ENCODE measurements at regions of chr11 and their contacts with region 1.

Region 1: DNA sequence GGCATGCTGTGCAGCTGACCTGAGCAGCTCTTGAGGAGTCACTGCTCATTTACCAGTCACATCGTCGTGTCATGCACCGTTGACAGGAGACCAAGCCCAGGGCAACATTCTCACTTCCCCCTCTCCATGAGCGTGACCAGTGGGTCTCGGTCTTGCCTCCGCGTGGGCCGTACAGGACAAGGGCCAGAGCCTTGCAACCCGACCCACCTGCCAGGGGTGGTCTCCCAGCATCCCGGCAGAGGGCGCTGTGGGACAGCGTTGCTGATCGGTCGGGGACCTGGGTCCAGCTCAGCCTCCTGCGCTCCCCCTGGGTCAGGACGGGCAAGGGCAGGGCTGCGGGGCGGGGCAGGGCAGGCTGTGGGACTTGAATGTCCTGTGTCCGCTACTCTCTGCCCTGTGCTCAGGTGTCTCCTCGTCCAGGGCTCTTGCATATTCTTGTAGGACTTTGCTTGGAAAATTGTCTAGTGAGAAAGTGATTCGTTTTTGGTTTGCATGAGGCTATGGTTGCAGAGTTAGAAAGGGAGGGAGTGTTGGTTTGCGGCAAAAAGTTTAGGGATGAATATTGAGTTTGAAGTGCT is 16.2 kb downstream of the EIF4G2 start:
- DNase-seq: peak; percentile 90
- H3K4me3 Mint-ChIP-seq: no peak overlapping the region
- H3K27ac Mint-ChIP-seq: no peak overlapping the region
- H3K4me1 Mint-ChIP-seq: peaks cover 14% of the 10 kb centered on the region
- H3K27me3 Mint-ChIP-seq: no peaks in the 10 kb centered on the region

Region 2: GRCh38 chr11:10426475-10426874 is 366.0 kb before region 1 on chr11:
- CTCF ChIA-PET with region 1: no interaction called
- intact Hi-C with region 1: no loop called
- DNase-seq: no peak
- H3K4me3 Mint-ChIP-seq: no peak overlapping the region
- H3K27ac Mint-ChIP-seq: no peak overlapping the region
- H3K4me1 Mint-ChIP-seq: no peaks in the 10 kb centered on the region
- H3K27me3 Mint-ChIP-seq: peaks cover 5% of the 10 kb centered on the region

Region 3: GRCh38 chr11:10725114-10725906 is 67.2 kb before region 1 on chr11:
- CTCF ChIA-PET with region 1: no interaction called
- intact Hi-C with region 1: no loop called
- DNase-seq: peak; percentile 43
- H3K4me3 Mint-ChIP-seq: no peak overlapping the region
- H3K27ac Mint-ChIP-seq: peak overlapping the region; percentile 46
- H3K4me1 Mint-ChIP-seq: peaks cover 22% of the 10 kb centered on the region
- H3K27me3 Mint-ChIP-seq: no peaks in the 10 kb centered on the region

Region 4: GRCh38 chr11:10777393-10777793 is 15.1 kb before region 1 on chr11:
- CTCF ChIA-PET with region 1: interaction called, 24 read pairs
- intact Hi-C with region 1: no loop called
- DNase-seq: no peak
- H3K4me3 Mint-ChIP-seq: no peak overlapping the region
- H3K27ac Mint-ChIP-seq: no peak overlapping the region
- H3K4me1 Mint-ChIP-seq: peaks cover 6% of the 10 kb centered on the region
- H3K27me3 Mint-ChIP-seq: no peaks in the 10 kb centered on the region

Region 5: GRCh38 chr11:10847960-10848870 is 55.7 kb after region 1 on chr11:
- CTCF ChIA-PET with region 1: interaction called, 11 read pairs
- intact Hi-C with region 1: no loop called
- DNase-seq: no peak
- H3K4me3 Mint-ChIP-seq: no peak overlapping the region
- H3K27ac Mint-ChIP-seq: no peak overlapping the region
- H3K4me1 Mint-ChIP-seq: peaks cover 22% of the 10 kb centered on the region
- H3K27me3 Mint-ChIP-seq: no peaks in the 10 kb centered on the region

Region 6: DNA sequence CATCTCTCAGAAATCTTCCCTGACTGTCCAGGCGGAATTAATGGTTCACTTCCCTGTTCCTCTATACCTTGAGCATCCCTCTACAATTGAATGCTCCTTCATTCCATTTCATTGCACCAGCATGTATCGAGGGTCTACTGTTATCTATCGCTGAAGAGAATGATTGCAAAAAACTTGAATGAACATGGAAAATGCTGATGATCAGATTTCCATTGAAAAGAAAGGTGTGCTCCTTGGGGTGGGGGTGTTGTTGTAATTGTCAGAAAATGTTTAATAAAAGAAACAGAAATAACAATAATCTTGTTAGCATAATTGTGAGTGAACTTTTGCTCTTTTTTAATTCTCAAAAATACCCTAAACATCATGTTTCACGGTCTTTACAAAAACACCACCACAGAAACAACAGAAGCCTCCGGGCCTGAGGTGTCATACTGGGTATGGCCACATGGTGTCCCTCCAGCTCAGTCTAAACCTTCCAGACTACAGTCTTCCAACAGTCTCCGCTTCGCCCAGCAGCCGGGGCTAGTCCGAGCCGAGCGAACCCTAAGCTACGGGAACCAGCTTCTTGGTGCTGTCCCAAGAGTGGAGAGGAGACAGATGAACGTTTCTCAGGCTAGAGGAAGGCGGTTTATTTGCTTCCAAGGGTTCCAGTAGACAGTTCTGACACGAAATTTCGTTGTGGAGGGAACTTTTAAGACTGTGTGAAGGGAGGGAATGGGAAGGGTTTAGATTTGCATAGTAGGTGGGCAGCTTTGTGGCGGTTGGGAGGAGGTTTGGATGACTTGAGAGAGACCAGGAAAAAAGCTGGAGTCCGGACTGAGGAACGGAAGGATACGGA is 141.2 kb after region 1 on chr11:
- CTCF ChIA-PET with region 1: interaction called, 24 read pairs
- intact Hi-C with region 1: loop called (anchors 1 kb)
- DNase-seq: peak; percentile 93
- H3K4me3 Mint-ChIP-seq: peak overlapping the region; percentile 70
- H3K27ac Mint-ChIP-seq: no peak overlapping the region
- H3K4me1 Mint-ChIP-seq: peaks cover 12% of the 10 kb centered on the region
- H3K27me3 Mint-ChIP-seq: peaks cover 31% of the 10 kb centered on the region

Region 7: DNA sequence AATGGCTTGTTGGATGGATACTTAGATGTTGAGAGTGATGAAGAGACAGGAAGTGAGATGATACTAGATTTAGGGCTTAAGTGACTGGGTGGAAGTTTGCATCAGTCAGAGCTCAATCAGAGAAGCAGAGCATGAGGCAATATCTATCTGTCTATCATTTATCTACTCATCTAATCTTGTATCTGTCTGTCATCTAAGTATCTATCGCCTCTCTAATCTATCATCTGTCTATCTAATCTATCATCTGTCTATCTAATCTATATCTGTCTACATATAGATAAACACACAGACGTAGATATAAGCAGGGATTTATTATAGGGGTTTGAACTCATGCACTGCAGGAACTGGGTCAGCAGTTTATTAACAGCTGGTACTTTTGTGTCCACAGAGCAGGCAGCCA is 280.9 kb after region 1 on chr11:
- CTCF ChIA-PET with region 1: no interaction called
- intact Hi-C with region 1: no loop called
- DNase-seq: no peak
- H3K4me3 Mint-ChIP-seq: no peak overlapping the region
- H3K27ac Mint-ChIP-seq: no peak overlapping the region
- H3K4me1 Mint-ChIP-seq: peaks cover 15% of the 10 kb centered on the region
- H3K27me3 Mint-ChIP-seq: no peaks in the 10 kb centered on the region

Region 8: DNA sequence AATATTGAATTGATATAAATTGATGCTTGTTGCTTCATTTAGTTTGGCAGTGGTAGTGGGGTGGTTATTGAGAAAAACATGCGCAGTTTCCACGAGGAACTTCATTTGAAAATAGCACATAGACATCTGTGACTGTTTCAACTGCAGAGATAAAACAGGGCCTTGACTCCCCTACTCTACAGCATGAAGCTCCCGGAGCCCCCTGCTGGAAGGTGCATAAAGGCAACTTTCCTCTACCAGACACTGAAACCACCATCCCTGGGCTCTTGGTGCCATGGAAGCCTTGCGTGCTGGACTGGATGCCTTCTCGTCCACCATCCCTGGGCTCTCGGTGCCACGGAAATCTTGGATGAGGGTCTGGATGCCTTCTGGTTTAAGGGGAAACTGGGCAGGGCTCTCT is 364.7 kb after region 1 on chr11:
- CTCF ChIA-PET with region 1: interaction called, 5 read pairs
- intact Hi-C with region 1: loop called (anchors 5 kb)
- DNase-seq: peak; percentile 66
- H3K4me3 Mint-ChIP-seq: no peak overlapping the region
- H3K27ac Mint-ChIP-seq: no peak overlapping the region
- H3K4me1 Mint-ChIP-seq: peaks cover 28% of the 10 kb centered on the region
- H3K27me3 Mint-ChIP-seq: no peaks in the 10 kb centered on the region